ENCODE measurements at regions of chr12 and their contacts with region 1.

Region 1: DNA sequence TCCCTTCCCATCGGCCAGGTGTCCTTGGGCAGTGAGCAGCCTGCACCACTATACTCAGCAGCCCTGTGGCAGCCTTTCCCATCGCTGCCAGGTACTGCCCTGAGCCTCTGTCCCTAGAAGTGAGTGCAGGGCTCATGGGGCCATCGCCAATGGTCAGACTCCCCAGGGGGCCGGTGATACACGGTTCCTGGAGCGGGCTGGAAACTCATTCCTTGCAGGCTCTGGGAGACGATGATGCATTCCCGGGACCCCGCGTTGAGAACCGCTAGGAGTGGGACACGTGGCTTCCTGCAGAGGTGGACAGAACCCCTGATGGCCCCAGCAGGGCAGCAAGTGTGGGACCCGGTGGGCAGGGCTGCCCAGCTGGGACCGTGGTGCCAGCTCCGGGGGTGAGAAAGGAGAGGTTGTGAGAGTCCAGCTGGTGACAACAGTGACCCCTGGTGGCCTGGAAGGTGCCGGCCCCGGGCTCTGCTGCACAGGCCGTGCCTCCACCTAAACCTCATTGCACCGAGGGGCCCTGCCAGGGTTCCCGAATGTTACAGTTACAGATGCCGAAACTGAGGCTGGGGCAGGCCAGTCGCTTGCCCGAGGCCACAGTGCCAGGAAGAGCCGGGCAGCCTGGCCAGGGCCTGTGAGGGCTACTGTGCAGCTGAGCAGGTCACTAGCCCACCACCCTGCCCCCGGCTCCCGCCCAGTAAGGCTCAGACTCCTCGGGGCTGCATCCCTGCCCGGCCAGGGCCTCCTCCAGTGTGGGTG is 33.8 kb downstream of the FBRSL1 start:
- DNase-seq: peak; percentile 66
- H3K4me3 Mint-ChIP-seq: peak overlapping the region; percentile 53
- H3K27ac Mint-ChIP-seq: no peak overlapping the region
- H3K4me1 Mint-ChIP-seq: peaks cover 6% of the 10 kb centered on the region
- H3K27me3 Mint-ChIP-seq: no peaks in the 10 kb centered on the region
- CTCF ChIP-seq: peak; percentile 59

Region 2: GRCh38 chr12:132489602-132490239 is 34.0 kb before region 1 on chr12 and contains the start of gene FBRSL1:
- CTCF ChIA-PET with region 1: interaction called, 4 read pairs
- POLR2A ChIA-PET with region 1: no interaction called
- intact Hi-C with region 1: loop called (anchors 2 kb)
- DNase-seq: peak; percentile 81
- H3K4me3 Mint-ChIP-seq: peak within 1 kb of the TSS; percentile 71
- H3K27ac Mint-ChIP-seq: peak within 1 kb of the TSS; percentile 73
- H3K4me1 Mint-ChIP-seq: peaks cover 8% of the 10 kb centered on the region
- H3K27me3 Mint-ChIP-seq: peaks cover 17% of the 10 kb centered on the region
- CTCF ChIP-seq: no peak
- total RNA-seq, gene FBRSL1: 47.4 and 48.8 TPM in 2 replicates

Measured in MCF 10A (cell line).